AG04449 (cell line): ENCODE measurements at regions of chr16 and their contacts with region 1.

Region 1: GRCh38 chr16:28218104-28218503 is 6.3 kb upstream of the XPO6 start:
- DNase-seq: no peak
- H3K4me3 ChIP-seq: no peak overlapping the region
- CTCF ChIP-seq: peak; percentile 75

Region 2: GRCh38 chr16:27972500-27972899 is 245.6 kb before region 1 on chr16:
- CTCF ChIA-PET with region 1: interaction called, 27 read pairs
- POLR2A ChIA-PET with region 1: no interaction called
- DNase-seq: no peak
- H3K4me3 ChIP-seq: no peak overlapping the region
- CTCF ChIP-seq: peak; percentile 32

Region 3: DNA sequence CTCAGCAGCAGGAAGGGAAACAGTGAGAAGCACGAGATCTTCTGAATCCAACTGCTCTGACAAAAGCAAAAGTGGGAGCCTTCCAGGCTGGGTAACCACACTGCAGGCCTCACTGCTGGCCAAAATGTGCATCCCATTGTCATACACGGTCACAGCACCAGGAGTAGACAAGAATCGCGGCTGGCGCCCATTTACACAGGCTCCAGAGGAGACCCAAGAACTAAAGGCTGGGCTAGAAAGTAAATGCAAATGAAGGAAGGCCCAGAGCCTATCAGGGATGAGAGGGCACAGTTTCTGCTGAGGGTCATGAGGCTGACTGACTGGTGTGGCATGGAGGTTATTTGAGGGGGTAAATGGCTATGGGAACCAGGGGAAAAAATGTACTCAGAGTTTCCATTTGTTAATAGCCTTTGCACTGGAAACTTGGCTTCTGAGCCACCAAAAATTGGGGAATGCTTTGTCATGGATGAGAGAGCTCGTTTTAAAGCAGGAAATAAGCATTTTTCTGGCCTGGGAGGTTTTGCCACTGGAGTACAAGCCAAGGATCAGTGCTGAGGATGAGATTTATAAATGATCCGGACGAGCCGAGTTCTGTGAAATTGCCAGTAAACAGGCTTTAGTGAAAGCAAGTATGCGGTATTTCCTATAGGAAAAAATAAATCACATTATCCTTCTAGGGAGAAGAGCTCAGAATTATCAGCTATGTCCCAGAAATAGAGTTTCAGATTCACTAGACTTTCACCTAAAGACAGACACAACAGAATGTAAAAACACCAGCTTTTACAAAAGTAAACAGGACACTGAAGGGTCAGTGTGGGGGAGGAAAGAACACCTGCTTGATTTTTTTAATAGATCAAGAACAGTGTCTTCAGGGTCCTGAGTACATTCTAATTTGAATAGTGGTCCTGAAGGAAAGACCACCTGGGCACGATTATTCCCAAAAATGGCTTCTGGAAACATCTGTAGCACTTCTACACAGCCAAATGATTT is 87.7 kb before region 1 on chr16:
- CTCF ChIA-PET with region 1: interaction called, 10 read pairs
- POLR2A ChIA-PET with region 1: no interaction called
- DNase-seq: no peak
- H3K4me3 ChIP-seq: no peak overlapping the region
- CTCF ChIP-seq: no peak

Region 4: GRCh38 chr16:28297784-28298510 is 79.8 kb after region 1 on chr16:
- CTCF ChIA-PET with region 1: no interaction called
- POLR2A ChIA-PET with region 1: no interaction called
- DNase-seq: no peak
- H3K4me3 ChIP-seq: no peak overlapping the region
- CTCF ChIP-seq: no peak

Region 5: DNA sequence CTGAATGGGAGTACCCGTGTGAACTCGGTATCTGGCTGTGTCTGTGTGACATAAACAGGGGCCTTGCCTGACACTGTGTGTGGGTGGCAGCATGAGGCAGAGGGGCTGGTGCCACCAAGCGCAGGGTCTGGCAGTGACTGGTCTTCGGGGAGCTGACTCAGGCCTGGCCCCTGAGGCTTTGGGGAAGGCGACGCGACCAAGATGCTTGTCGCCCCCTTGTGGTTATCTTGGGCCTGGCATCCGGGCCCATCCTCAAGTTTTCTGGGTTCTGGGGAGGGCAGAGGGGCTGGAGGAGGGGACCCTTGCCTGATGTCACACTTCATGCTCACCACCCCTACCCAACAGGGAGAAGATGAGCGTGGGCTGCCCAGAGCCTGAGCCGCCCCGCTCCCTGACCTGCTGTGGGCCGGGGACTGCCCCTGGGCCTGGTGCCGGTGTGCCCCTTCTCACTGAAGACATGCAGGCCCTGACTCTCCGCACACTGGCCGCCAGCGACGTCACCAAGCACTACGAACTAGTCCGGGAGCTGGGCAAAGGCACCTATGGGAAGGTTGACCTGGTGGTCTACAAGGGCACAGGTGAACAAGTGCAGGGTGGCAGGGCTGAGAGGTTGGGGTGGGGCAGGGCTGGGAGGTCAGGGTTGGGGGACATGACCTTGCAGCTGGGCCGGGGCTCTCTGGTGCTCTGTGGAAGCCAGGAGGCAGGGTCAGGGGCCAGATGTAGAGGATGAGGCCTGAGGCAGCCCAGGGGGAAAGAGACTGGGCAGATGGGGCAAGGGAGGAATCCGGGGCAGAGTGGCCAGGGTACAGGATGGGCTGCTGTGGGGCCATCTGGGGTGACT is 99.2 kb after region 1 on chr16:
- CTCF ChIA-PET with region 1: no interaction called
- POLR2A ChIA-PET with region 1: no interaction called
- DNase-seq: no peak
- H3K4me3 ChIP-seq: no peak overlapping the region
- CTCF ChIP-seq: peak; percentile 83